Transverse colon (tissue), 4 donors: ENCODE measurements at regions of chr11 and their contacts with region 1.

Region 1: GRCh38 chr11:45298718-45299117 is 12.6 kb upstream of the SYT13 start:
- DNase-seq: no peak
- H3K4me3 ChIP-seq: no peak overlapping the region
- H3K27ac ChIP-seq: no peak overlapping the region
- H3K4me1 ChIP-seq: peaks cover 0 to 9% (median 0%) of the 10 kb centered on the region in 4 donors
- H3K27me3 ChIP-seq: no peaks in the 10 kb centered on the region
- CTCF ChIP-seq: no peak
- EP300 ChIP-seq: no peak
- POLR2A ChIP-seq: no peak

Region 2: DNA sequence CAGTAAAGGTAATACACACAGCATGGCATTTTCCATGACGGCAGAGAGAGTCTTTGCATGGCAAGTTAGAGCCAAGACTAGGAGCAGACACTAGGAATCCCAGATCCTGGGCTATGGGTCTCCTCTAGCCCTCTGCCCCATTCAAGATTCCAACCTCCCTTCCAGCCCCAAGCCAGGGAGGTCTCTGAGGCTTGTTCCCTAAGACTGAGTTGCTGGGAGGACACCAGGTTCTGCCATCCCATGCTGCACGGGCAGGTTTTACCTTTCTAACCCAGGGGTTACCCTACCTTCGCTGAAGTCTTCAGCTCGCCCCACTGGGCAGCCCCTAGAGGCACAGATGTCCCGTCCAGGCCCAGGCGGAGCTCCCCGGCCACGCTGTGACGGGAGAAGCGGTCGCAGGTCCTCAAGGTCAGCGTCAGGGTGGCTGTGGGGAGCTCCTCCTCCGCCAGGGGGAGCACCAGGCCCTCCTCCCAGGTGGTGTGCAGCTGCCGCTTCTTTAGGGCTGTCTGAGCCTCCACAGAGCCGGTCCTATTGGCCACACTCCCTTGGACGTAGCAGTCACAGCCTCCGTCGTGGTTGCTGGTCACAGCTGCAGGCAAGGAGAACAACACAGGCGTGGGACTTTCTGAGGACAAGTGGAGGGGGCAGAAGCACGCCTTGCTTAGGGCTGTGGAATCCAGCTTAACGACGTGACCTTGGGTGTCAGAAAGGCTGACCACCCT is 46.4 kb before region 1 on chr11:
- in situ Hi-C with region 1: loop called in 1 of 4 experiments (anchors 5 kb)
- intact Hi-C with region 1: no loop called
- DNase-seq: peak; percentile 84
- H3K4me3 ChIP-seq: no peak overlapping the region
- H3K27ac ChIP-seq: no peak overlapping the region
- H3K4me1 ChIP-seq: no peaks in the 10 kb centered on the region
- H3K27me3 ChIP-seq: no peaks in the 10 kb centered on the region
- CTCF ChIP-seq: peak; percentile 65 to 92 (median 77)
- EP300 ChIP-seq: no peak
- POLR2A ChIP-seq: no peak

Region 3: GRCh38 chr11:45267052-45267451 is 31.7 kb before region 1 on chr11:
- in situ Hi-C with region 1: no loop called
- intact Hi-C with region 1: no loop called
- DNase-seq: peak; percentile 85
- H3K4me3 ChIP-seq: no peak overlapping the region
- H3K27ac ChIP-seq: peak overlapping the region; percentile 64 to 82 (median 76)
- H3K4me1 ChIP-seq: peaks cover 5 to 34% (median 24%) of the 10 kb centered on the region in 4 donors
- H3K27me3 ChIP-seq: no peaks in the 10 kb centered on the region
- CTCF ChIP-seq: peak; percentile 38 to 80 (median 54)
- EP300 ChIP-seq: no peak
- POLR2A ChIP-seq: no peak

Region 4: GRCh38 chr11:45400591-45400990 is 101.9 kb after region 1 on chr11:
- in situ Hi-C with region 1: no loop called
- intact Hi-C with region 1: no loop called
- DNase-seq: no peak
- H3K4me3 ChIP-seq: no peak overlapping the region
- H3K27ac ChIP-seq: no peak overlapping the region
- H3K4me1 ChIP-seq: no peaks in the 10 kb centered on the region
- H3K27me3 ChIP-seq: peaks cover 11% of the 10 kb centered on the region
- CTCF ChIP-seq: no peak
- EP300 ChIP-seq: no peak
- POLR2A ChIP-seq: no peak

Region 5: DNA sequence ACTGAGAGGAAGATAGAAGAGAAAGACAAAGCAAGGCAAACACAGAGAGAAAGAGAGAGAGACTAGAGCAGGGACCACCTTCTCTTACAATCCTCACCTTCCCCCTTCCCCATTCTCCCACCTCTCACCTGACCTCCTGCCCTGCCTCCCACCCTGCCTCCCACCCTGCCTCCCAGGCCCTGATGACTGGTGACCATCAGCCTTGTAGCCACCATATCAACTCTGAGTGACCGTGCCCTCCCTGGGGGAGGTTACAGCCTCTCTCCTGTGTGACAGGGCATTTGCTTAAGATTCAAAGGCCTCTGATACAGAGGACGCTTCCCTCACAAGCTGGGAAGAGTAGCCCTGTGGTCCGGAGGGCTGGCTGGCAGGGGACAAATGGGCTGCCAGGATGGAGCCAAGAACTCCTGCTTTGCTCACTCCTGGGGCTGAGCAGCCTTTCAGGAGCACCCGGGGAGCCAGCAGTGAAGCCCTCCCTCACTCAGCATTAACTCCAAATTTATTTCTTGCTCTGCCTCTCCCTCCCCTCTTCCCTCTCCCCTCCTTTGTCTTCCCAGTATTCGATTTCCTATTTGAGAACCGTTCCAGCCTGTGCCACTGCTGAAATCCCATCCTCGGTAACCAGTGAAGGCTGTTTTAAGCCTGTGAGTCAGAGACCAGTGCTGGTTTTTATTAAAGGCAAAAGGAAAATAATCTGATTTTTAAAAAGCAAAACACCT is 112.7 kb after region 1 on chr11:
- in situ Hi-C with region 1: no loop called
- intact Hi-C with region 1: no loop called
- DNase-seq: no peak
- H3K4me3 ChIP-seq: no peak overlapping the region
- H3K27ac ChIP-seq: no peak overlapping the region
- H3K4me1 ChIP-seq: no peaks in the 10 kb centered on the region
- H3K27me3 ChIP-seq: peaks cover 40% of the 10 kb centered on the region
- CTCF ChIP-seq: no peak
- EP300 ChIP-seq: no peak
- POLR2A ChIP-seq: no peak